Mammary epithelial cell (primary cell): ENCODE measurements at regions of chr4 and their contacts with region 1.

Region 1: GRCh38 chr4:167290678-167291077 is 56.4 kb upstream of the SPOCK3 start:
- DNase-seq: peak; percentile 1
- H3K4me3 ChIP-seq: no peak overlapping the region
- H3K27ac ChIP-seq: no peak overlapping the region
- H3K4me1 ChIP-seq: no peaks in the 10 kb centered on the region
- H3K27me3 ChIP-seq: no peaks in the 10 kb centered on the region
- CTCF ChIP-seq: peak; percentile 27 to 50

Region 2: DNA sequence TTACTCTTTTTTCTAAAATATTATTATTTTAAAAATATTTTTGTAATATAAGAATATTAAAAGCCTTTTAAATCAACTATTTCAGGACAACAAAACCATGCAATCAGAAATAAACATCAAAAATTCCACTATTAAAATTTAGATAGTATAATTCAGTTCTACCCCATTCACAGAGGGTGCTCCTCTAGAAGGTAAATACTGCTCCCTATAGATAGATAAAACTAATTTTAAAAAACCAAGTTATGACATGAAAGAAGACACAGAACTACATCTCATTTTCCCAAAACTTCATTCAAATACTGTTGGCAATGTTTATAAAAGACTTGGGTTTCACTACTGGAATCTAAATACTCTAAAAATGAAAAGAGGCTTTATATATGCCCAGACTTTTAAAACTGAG is 275.7 kb before region 1 on chr4:
- CTCF ChIA-PET with region 1: no interaction called
- dilution Hi-C with region 1: loop called (anchors 25 kb)
- in situ Hi-C with region 1: loop called (anchors 5 to 25 kb)
- intact Hi-C with region 1: no loop called
- DNase-seq: no peak
- H3K4me3 ChIP-seq: no peak overlapping the region
- H3K27ac ChIP-seq: no peak overlapping the region
- H3K4me1 ChIP-seq: no peaks in the 10 kb centered on the region
- H3K27me3 ChIP-seq: no peaks in the 10 kb centered on the region
- CTCF ChIP-seq: no peak